ENCODE measurements at regions of chr10 and their contacts with region 1.

Region 1: DNA sequence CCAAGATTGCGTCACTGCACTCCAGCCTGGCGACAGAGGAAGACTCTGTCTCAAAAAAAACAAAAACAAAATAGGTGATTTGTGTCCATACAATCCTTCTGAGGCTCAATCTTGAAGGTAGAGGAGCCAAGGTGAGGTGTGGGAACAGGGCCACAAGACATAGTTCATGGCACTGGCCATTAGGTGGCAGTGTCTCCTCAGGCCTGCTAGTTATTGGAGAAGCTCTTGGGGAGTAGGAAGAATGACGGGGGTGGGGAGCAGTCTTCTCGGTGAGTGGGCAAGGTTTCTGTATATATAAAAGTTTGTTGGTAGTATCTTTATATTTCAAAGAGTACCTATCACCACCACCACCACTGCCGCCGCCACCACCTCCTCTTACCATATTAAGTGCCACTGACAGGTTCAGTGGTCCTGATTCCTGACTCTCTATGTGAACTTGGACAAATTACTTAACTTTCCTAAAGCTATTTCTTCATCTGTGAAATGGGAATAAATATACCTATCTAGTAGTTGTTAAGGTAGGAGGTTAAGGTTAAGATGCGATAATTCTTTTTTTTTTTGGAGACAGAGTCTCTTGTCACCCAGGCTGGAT is 24.0 kb downstream of the CCSER2 start:
- H3K4me3 ChIP-seq: no peak overlapping the region
- H3K27ac ChIP-seq: no peak overlapping the region
- H3K4me1 ChIP-seq: peaks cover 11% of the 10 kb centered on the region; the same call in 1 of the 2 replicates
- CTCF ChIP-seq: peak; percentile 50

Region 2: GRCh38 chr10:84256510-84257342 is 95.6 kb before region 1 on chr10:
- CTCF ChIA-PET with region 1: no interaction called
- POLR2A ChIA-PET with region 1: no interaction called
- H3K4me3 ChIP-seq: no peak overlapping the region
- H3K27ac ChIP-seq: no peak overlapping the region
- H3K4me1 ChIP-seq: no peaks in the 10 kb centered on the region
- CTCF ChIP-seq: no peak

Region 3: GRCh38 chr10:84302223-84302622 is 50.1 kb before region 1 on chr10:
- CTCF ChIA-PET with region 1: no interaction called
- POLR2A ChIA-PET with region 1: no interaction called
- H3K4me3 ChIP-seq: no peak overlapping the region
- H3K27ac ChIP-seq: no peak overlapping the region
- H3K4me1 ChIP-seq: no peaks in the 10 kb centered on the region
- CTCF ChIP-seq: no peak

Region 4: GRCh38 chr10:84337199-84337598 is 15.1 kb before region 1 on chr10:
- CTCF ChIA-PET with region 1: interaction called, 18 read pairs
- POLR2A ChIA-PET with region 1: no interaction called
- H3K4me3 ChIP-seq: no peak overlapping the region
- H3K27ac ChIP-seq: no peak overlapping the region
- H3K4me1 ChIP-seq: peaks cover 16% of the 10 kb centered on the region
- CTCF ChIP-seq: no peak

Region 5: GRCh38 chr10:84469470-84469869 is 117.1 kb after region 1 on chr10:
- CTCF ChIA-PET with region 1: no interaction called
- POLR2A ChIA-PET with region 1: no interaction called
- H3K4me3 ChIP-seq: no peak overlapping the region
- H3K27ac ChIP-seq: no peak overlapping the region
- H3K4me1 ChIP-seq: no peaks in the 10 kb centered on the region
- CTCF ChIP-seq: no peak